Gastrocnemius medialis (tissue), 4 donors: ENCODE measurements at regions of chr4 and their contacts with region 1.

Region 1: DNA sequence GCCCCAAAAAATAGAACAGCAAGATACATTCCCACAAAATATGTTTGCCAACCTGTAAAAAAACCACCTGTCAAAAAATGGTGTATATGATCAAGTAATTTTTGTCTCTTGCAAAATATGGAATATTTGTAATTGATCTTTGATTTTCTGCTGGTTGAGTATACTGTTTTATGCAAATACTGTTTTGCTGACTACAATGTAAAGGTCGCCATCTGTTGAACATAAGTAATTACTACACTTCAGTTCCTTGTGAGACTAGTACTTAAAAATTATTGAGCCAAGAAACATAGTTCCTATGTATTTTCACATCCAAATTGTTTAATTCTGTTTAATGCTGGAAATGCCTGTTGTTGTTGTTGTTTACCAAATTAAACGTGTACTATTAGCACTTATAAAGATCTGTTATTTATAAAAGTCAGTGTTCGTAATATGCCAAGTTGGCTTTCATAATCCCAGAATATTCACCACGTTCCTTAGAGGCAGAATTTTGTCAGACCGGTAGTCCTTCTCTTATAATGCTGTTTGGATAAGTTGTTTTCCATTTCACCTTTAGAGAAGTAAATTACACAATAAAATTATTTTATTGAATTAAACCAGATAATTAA is 144.2 kb downstream of the PDLIM5 start:
- DNase-seq: no peak
- ATAC-seq: peak in 1 of 2 donors; percentile 41
- H3K4me3 ChIP-seq: no peak overlapping the region
- H3K27ac ChIP-seq: peak overlapping the region; percentile 53 to 75 (median 66)
- H3K4me1 ChIP-seq: peaks cover 8 to 9% of the 10 kb centered on the region in 2 donors
- H3K27me3 ChIP-seq: no peaks in the 10 kb centered on the region
- CTCF ChIP-seq: peak; percentile 55 to 89 (median 64)
- POLR2A ChIP-seq: no peak

Region 2: GRCh38 chr4:94207469-94208224 is 388.3 kb before region 1 on chr4 and contains the start of gene SMARCAD1:
- in situ Hi-C with region 1: no loop called
- intact Hi-C with region 1: loop called (anchors 10 kb)
- DNase-seq: peak; percentile 73 to 83
- ATAC-seq: peak; percentile 97 to 98
- H3K4me3 ChIP-seq: peak within 1 kb of the TSS; percentile 86 to 99 (median 96)
- H3K27ac ChIP-seq: peak within 1 kb of the TSS; percentile 88 to 98 (median 96)
- H3K4me1 ChIP-seq: peaks cover 23 to 27% of the 10 kb centered on the region in 2 donors
- H3K27me3 ChIP-seq: no peaks in the 10 kb centered on the region
- CTCF ChIP-seq: peak in 1 of 5 experiments; percentile 12
- POLR2A ChIP-seq: peak; percentile 21 to 29
- total RNA-seq, gene SMARCAD1: 5.7 to 16.9 (median 8.0) TPM

Region 3: GRCh38 chr4:94304365-94304971 is 291.5 kb before region 1 on chr4:
- in situ Hi-C with region 1: no loop called
- intact Hi-C with region 1: loop called (anchors 10 kb)
- DNase-seq: no peak
- ATAC-seq: no peak
- H3K4me3 ChIP-seq: no peak overlapping the region
- H3K27ac ChIP-seq: no peak overlapping the region
- H3K4me1 ChIP-seq: no peaks in the 10 kb centered on the region
- H3K27me3 ChIP-seq: no peaks in the 10 kb centered on the region
- CTCF ChIP-seq: peak in 3 of 5 experiments; percentile 33 to 59 (median 51)
- POLR2A ChIP-seq: no peak

Region 4: GRCh38 chr4:94451695-94452475 is 144.1 kb before region 1 on chr4 and contains the start of gene PDLIM5:
- in situ Hi-C with region 1: no loop called
- intact Hi-C with region 1: loop called (anchors 5 kb)
- DNase-seq: peak; percentile 88 to 92
- ATAC-seq: peak; percentile 74 to 78
- H3K4me3 ChIP-seq: peak within 1 kb of the TSS; percentile 81 to 96 (median 90)
- H3K27ac ChIP-seq: peak within 1 kb of the TSS; percentile 93 to 99 (median 99)
- H3K4me1 ChIP-seq: peaks cover 28 to 43% of the 10 kb centered on the region in 2 donors
- H3K27me3 ChIP-seq: no peaks in the 10 kb centered on the region
- CTCF ChIP-seq: no peak
- POLR2A ChIP-seq: peak; percentile 99
- total RNA-seq, gene PDLIM5: 473 to 833 (median 673) TPM